H1 (cell line): ENCODE measurements at regions of chr14 and their contacts with region 1.

Region 1: DNA sequence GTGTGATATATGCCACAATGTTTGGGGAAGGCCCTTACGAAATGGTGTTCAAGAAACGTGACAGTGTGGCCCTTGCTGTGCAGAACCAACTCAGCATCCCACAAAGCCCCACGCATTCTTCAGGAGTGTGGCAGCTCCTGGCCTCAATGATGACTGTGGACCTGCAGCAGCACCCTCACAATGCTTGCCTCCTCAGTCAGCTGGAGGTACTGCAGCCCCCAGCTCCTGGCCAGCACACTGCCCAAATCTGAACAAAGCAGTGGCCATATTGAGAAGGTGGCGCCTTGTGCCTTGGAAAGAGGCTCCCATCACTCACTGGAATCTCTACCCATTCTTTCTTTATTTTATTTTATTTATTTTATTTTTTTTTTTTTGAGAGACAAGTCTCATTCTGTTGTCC is 10.4 kb downstream of the POLE2 start:
- DNase-seq: no peak
- H3K4me3 ChIP-seq: no peak overlapping the region
- H3K27ac ChIP-seq: no peak overlapping the region
- H3K4me1 ChIP-seq: no peaks in the 10 kb centered on the region
- H3K27me3 ChIP-seq: no peaks in the 10 kb centered on the region
- CTCF ChIP-seq: peak in 2 of 3 experiments; percentile 35 to 36; a peak in 2 of 4 replicates
- EP300 ChIP-seq: no peak
- POLR2A ChIP-seq: no peak
- RAD21 ChIP-seq: no peak; a peak in 1 of 4 replicates

Region 2: GRCh38 chr14:49692811-49693734 is 15.4 kb after region 1 on chr14 and contains the start of gene KLHDC1:
- CTCF ChIA-PET with region 1: interaction called, 3 read pairs
- POLR2A ChIA-PET with region 1: interaction called, 11 read pairs
- DNase-seq: peak in 1 of 2 experiments; percentile 77
- H3K4me3 ChIP-seq: peak within 1 kb of the TSS; percentile 58 to 89 (median 76)
- H3K27ac ChIP-seq: peak within 1 kb of the TSS; percentile 33; the same call in 1 of the 2 replicates
- H3K4me1 ChIP-seq: peaks cover 0 to 9% (median 4%) of the 10 kb centered on the region in 4 experiments; a peak in 6 of 7 replicates
- H3K27me3 ChIP-seq: peaks cover 0 to 13% (median 7%) of the 10 kb centered on the region in 4 experiments
- CTCF ChIP-seq: no peak
- EP300 ChIP-seq: no peak
- POLR2A ChIP-seq: peak; percentile 55 to 58; a peak in 2 of 3 replicates
- RAD21 ChIP-seq: no peak
- total RNA-seq, gene KLHDC1: not detected in 2 replicates